AG04450 (cell line): ENCODE measurements at regions of chr1 and their contacts with region 1.

Region 1: GRCh38 chr1:67664048-67664447 is 21.0 kb upstream of the GADD45A start:
- DNase-seq: no peak
- H3K4me3 ChIP-seq: no peak overlapping the region
- H3K27ac ChIP-seq: no peak overlapping the region
- H3K27me3 ChIP-seq: no peaks in the 10 kb centered on the region
- CTCF ChIP-seq: no peak

Region 2: GRCh38 chr1:67570473-67571143 is 93.4 kb before region 1 on chr1:
- CTCF ChIA-PET with region 1: no interaction called
- POLR2A ChIA-PET with region 1: interaction called, 10 read pairs
- DNase-seq: peak; percentile 86
- H3K4me3 ChIP-seq: no peak overlapping the region
- H3K27ac ChIP-seq: peak overlapping the region; percentile 89
- H3K27me3 ChIP-seq: no peaks in the 10 kb centered on the region
- CTCF ChIP-seq: no peak

Region 3: DNA sequence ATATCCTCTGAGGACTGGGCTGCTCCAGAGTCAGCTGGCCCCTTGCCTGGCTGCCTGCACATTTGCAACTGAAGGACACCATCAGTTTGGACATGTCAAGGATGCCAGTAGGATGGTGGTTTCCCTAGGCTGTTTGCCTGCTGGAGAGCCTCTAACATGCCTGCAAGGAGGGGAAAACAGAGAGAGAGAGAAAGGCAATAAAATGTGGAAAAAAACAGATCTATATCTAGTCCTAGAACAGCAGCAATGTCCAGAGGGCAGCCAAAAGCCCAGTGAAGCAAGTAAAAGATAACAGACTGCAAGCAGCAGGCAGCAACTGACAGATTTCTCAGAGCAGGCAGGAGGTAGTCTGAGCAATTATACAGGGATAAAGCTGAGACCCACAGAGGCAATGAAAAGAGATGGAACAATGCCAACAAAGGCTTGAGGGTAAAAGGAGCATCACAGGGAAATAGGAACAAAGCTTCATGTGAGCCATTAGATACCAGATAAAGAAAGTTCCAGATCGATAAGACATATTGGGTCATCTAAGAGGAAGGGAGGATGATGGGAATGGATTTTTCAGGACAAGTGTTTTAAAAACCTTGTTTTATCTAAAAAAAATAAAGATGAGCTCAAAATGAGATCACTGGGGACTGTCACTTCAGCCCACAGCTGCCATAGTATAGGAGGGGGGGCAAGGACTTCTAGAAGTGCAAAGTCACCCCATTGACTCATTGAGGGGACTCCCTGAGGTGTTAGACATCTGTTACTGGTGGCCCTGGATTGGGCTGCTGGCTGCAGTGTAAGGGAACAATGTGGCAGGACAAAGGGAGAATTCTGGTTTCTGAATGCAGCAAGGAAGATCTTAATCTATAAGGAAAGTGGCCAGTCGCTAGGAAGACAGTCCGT is 17.7 kb before region 1 on chr1:
- CTCF ChIA-PET with region 1: no interaction called
- POLR2A ChIA-PET with region 1: no interaction called
- DNase-seq: no peak
- H3K4me3 ChIP-seq: no peak overlapping the region
- H3K27ac ChIP-seq: no peak overlapping the region
- H3K27me3 ChIP-seq: no peaks in the 10 kb centered on the region
- CTCF ChIP-seq: no peak